ENCODE measurements at regions of chr16 and their contacts with region 1.

Region 1: GRCh38 chr16:56519459-56520250 is at the start of gene BBS2:
- DNase-seq: peak; percentile 94
- ATAC-seq: peak; percentile 97
- total RNA-seq, gene BBS2: 39.4 to 55.0 TPM

Region 2: DNA sequence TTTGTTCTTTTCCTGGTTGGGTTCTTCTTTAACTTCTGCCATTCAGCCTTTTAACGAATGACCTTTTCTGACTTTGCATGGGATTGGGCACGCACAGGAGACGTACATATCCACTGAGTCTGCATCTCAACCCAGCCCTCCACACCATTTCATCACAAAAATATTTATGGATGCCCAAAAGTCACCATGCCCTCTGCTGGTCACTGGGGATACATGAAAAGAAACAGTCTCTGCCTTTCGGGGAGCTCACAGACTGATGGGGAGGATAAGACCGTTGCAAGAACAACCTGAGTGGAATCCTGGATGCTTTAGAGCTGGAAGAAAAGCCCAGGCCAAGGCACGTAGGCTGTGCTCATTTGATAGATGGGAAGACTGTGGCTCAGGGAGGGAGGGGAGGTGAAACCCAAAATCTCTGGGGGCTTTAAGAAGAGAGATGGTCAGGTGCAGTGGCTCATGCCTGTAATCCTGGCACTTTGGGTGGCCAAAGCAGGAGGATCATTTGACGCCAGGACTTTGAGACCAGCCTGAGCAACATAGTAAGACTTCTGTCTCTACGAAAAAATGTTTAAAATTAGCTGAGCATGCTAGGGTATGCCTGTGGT is 80.8 kb after region 1 on chr16:
- intact Hi-C with region 1: loop called (anchors 5 kb)
- DNase-seq: no peak
- ATAC-seq: peak; percentile 14 to 65

Region 3: GRCh38 chr16:56691885-56692284 is 172.2 kb after region 1 on chr16:
- intact Hi-C with region 1: loop called in 1 of 2 experiments (anchors 10 kb)
- DNase-seq: no peak
- ATAC-seq: peak; percentile 54 to 83

Region 4: DNA sequence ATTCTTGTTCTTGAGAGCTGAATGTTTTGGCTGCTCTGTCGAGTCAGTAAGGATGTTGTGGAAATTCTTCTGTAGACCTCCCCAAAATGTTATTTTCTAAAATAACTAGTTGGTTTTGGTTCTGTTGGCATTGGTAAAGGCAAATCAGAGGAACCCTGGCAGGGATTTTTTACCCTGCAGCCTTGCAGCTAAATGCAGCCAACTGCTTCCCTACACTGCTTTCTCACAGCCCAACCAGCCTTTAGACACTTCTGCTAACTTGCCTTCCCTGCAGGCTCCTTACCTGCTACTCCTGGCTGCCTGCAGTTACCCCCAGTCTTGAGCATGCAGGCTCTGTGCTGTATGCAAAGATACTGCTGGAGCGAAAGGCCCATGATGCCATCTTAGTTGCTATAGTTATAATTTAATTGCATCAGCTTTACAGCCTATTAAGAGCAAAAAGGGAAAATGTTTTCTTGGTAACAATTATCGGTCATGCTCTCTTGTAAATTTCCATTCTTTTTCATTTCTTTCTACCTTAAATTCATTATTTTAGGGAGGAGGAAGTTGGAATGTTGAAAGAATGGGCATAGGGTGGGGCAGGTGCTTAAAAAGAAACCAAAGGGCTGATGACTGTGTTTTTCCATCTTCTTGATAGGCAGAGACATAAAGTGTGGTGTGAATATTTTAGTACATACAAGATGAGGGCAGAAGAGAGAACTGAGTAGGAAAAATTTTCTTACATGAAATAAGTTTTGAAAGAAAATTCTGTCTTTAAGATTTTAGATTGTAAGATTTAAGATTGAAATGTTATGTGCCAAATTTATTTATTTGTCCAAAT is 230.2 kb after region 1 on chr16:
- intact Hi-C with region 1: no loop called
- DNase-seq: no peak
- ATAC-seq: peak in 1 of 2 donors; percentile 62

Measured in left cardiac atrium (tissue), 4 donors.